HEK293T (cell line): ENCODE measurements at regions of chr5 and their contacts with region 1.

Region 1: GRCh38 chr5:38569180-38569579 is 12.7 kb upstream of the LIFR start:
- DNase-seq: no peak

Region 2: DNA sequence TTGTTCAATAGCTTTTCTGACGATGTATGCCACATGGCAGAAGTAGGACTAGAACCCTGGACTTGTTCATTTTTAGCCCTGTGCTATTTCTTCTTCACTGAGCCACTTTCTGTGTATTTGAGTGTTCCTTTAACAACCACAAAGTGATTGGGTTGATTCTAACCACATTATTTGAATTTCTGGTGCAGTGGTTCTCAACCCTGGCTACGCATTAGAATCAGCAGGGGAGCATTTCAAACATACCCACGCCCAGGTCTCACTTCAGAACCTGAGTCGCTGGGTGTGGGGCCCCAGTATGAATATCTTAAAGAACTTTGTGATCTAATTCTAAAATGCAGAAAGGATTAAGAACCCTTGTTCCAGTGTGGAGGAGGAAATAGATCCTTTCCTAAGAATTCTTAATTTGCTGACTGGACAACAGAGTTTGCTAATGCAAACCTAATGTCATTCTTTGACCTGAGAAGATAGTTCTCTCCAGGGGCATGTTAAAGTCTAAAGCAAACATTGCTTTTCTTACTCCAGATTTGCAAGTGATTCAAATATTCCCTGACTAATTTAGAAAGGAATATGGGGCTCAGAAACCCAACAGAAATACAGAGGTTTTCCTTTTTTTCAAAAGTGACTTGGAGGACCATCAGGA is 654.0 kb before region 1 on chr5:
- CTCF ChIA-PET with region 1: no interaction called
- POLR2A ChIA-PET with region 1: no interaction called
- DNase-seq: no peak

Region 3: GRCh38 chr5:38540314-38540713 is 28.9 kb before region 1 on chr5:
- CTCF ChIA-PET with region 1: interaction called, 15 read pairs
- POLR2A ChIA-PET with region 1: no interaction called
- DNase-seq: no peak

Region 4: GRCh38 chr5:38615981-38616451 is 46.8 kb after region 1 on chr5:
- CTCF ChIA-PET with region 1: no interaction called
- POLR2A ChIA-PET with region 1: no interaction called
- DNase-seq: no peak